Heart right ventricle (tissue), 16 donors: ENCODE measurements at regions of chr11 and their contacts with region 1.

Region 1: DNA sequence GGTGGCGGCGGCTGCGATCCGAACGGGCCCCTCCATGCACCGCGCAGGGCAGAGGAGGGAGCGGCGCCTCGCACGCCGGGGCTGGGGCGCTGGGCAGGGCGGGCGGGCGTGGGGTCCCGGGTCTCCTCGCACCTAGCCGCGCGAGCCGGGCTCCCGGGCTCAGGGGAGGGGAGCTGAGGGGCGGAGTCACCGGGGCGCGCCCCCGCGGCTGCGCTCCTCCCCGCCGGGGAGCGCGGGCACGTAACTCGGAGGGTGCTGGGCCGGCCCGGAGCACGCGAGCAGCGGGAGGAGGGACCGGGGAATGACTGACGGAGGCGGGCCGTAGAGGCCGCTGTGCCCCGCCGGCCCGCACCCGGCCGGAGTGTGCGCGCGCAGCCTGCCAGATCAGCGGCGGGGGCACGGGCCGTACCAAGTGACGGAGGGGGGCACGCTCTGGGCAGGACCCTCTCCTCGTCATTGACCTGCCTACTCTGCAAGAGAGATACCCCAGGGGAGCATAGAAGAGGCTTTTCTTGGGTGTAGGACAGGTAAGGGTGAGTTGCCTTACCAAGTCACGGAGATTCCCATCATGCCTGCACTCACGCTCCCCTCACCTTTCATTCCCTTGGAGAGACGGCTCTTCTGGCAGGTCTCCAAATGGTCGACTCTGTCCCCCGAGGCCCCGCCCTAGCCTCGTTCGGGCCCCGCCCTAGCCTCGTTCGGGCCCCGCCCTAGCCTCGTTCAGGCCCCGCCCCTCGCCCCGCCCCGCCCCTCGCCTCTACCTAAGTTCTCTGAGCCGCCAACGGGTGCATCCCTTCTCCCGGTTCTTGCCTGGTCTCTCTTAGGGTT is at the start of gene CDON:
- DNase-seq: peak; percentile 91 to 94
- ATAC-seq: peak; percentile 98 to 100 (median 99)
- H3K4me3 ChIP-seq: peak within 1 kb of the TSS; percentile 66 to 84 (median 72)
- H3K27ac ChIP-seq: peak within 1 kb of the TSS in 9 of 10 donors; percentile 63 to 90 (median 78)
- H3K4me1 ChIP-seq: peaks cover 0 to 21% (median 16%) of the 10 kb centered on the region in 9 donors
- H3K27me3 ChIP-seq: peaks cover 0 to 30% (median 0%) of the 10 kb centered on the region in 7 donors
- CTCF ChIP-seq: peak in 4 of 9 donors; percentile 25 to 53 (median 44)
- total RNA-seq, gene CDON: 5.4 to 17.1 (median 9.3) TPM

Region 2: GRCh38 chr11:125724125-125724524 is 338.8 kb before region 1 on chr11:
- intact Hi-C with region 1: no loop called
- DNase-seq: no peak
- ATAC-seq: no peak
- H3K4me3 ChIP-seq: no peak overlapping the region
- H3K27ac ChIP-seq: no peak overlapping the region
- H3K4me1 ChIP-seq: no peaks in the 10 kb centered on the region
- H3K27me3 ChIP-seq: peaks cover 0 to 9% (median 0%) of the 10 kb centered on the region in 7 donors
- CTCF ChIP-seq: peak in 1 of 9 donors; percentile 10

Region 3: GRCh38 chr11:125923012-125923579 is 139.8 kb before region 1 on chr11:
- intact Hi-C with region 1: loop called in 3 of 10 experiments (anchors 5 to 10 kb)
- DNase-seq: peak; percentile 24 to 68
- ATAC-seq: peak in 7 of 8 donors; percentile 76 to 87 (median 81)
- H3K4me3 ChIP-seq: no peak overlapping the region
- H3K27ac ChIP-seq: no peak overlapping the region
- H3K4me1 ChIP-seq: no peaks in the 10 kb centered on the region
- H3K27me3 ChIP-seq: peaks cover 0 to 17% (median 0%) of the 10 kb centered on the region in 7 donors
- CTCF ChIP-seq: peak; percentile 62 to 87 (median 79)

Region 4: GRCh38 chr11:125941619-125942611 is 121.0 kb before region 1 on chr11:
- intact Hi-C with region 1: loop called in 4 of 10 experiments (anchors 5 to 10 kb)
- DNase-seq: peak; percentile 55 to 63
- ATAC-seq: peak; percentile 68 to 89 (median 78)
- H3K4me3 ChIP-seq: no peak overlapping the region
- H3K27ac ChIP-seq: peak overlapping the region in 8 of 10 donors; percentile 5 to 72 (median 54)
- H3K4me1 ChIP-seq: peaks cover 7 to 26% (median 17%) of the 10 kb centered on the region in 9 donors
- H3K27me3 ChIP-seq: peaks cover 0 to 4% (median 0%) of the 10 kb centered on the region in 7 donors
- CTCF ChIP-seq: peak; percentile 30 to 74 (median 70)

Region 5: GRCh38 chr11:126024123-126024522 is 38.8 kb before region 1 on chr11:
- intact Hi-C with region 1: no loop called
- DNase-seq: no peak
- ATAC-seq: peak; percentile 61 to 95 (median 78)
- H3K4me3 ChIP-seq: no peak overlapping the region
- H3K27ac ChIP-seq: peak overlapping the region in 5 of 10 donors; percentile 7 to 39 (median 34)
- H3K4me1 ChIP-seq: peaks cover 0 to 20% (median 4%) of the 10 kb centered on the region in 9 donors
- H3K27me3 ChIP-seq: no peaks in the 10 kb centered on the region
- CTCF ChIP-seq: no peak

Region 6: DNA sequence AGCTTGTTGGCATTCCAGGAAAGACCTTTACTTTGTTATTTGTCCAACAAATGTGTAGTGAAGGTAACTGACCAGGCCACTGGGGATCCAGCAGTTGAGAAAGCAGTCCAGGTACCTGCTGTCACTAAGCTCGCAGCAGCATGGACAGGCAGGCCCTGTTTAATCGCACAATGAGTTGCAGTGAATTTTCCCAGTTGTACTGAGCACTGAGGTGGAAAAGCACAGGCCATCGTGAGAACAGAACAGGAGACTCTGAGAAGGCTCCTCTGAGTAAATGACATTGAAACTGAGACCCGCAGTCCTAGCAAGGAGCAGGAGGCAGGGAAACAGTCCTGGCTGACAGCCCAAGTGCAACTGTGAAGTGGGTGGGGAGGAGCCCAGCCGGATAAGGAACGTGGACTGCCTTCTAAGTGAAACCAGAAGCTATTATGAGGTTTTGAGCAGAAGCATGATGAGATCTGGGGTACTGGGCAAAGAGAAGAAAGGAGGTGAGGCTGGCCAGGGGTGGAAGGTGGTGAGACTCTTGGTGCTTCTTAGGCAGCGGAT is 39.6 kb after region 1 on chr11:
- intact Hi-C with region 1: no loop called
- DNase-seq: peak; percentile 33 to 49
- ATAC-seq: peak; percentile 19 to 73 (median 47)
- H3K4me3 ChIP-seq: no peak overlapping the region
- H3K27ac ChIP-seq: no peak overlapping the region
- H3K4me1 ChIP-seq: peaks cover 3 to 18% (median 11%) of the 10 kb centered on the region in 9 donors
- H3K27me3 ChIP-seq: no peaks in the 10 kb centered on the region
- CTCF ChIP-seq: no peak

Region 7: GRCh38 chr11:126115816-126116331 is 53.0 kb after region 1 on chr11:
- intact Hi-C with region 1: loop called in 5 of 10 experiments (anchors 5 to 10 kb)
- DNase-seq: peak; percentile 64 to 75
- ATAC-seq: peak; percentile 63 to 81 (median 73)
- H3K4me3 ChIP-seq: no peak overlapping the region
- H3K27ac ChIP-seq: peak overlapping the region; percentile 23 to 86 (median 78)
- H3K4me1 ChIP-seq: peaks cover 25 to 59% (median 49%) of the 10 kb centered on the region in 9 donors
- H3K27me3 ChIP-seq: no peaks in the 10 kb centered on the region
- CTCF ChIP-seq: peak in 5 of 9 donors; percentile 7 to 48 (median 45)

Region 8: DNA sequence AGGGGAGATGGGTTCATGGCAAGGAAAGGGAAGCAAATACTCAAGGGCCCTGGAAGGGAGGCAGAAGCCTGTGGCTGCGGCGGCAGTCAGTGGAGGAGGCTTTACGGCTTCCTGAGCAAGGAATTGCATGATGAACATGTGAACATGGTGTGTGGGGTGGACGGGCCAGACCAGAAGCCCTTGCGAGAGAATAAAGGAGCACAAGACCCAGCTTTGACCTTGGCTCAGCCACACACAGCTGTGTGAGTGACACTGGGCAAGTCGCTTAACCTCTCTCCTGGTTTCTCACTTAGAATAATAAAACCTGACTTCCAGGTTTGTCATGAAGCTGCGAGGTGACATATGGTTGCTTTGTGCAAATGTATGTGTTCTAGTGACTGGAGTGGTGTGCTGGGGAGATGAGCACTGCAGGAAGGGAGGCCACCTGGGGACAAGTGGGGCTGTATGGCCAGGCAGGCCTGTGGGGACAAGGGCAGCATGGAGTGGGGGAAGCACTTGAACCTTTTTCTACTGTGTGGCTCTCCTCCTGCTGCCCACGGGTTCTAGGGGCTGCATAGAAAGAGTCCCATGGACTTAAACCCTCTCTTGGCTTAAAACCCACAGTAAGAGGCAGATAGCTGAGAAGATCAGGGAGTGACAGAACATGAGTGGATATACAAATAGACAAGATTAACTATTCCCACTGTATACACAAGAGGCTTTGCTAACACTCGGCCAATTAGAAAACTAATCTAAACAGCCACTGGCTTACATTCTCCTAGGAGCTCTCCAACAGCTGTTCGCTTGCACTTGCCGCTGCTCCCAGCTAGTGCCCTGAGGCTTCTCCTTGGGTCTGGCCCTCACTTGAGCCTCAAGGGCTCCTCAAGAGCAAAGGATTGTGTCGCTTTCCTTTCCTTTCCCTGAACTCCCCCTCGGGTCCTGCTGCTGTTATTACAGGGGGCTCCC is 67.1 kb after region 1 on chr11:
- intact Hi-C with region 1: no loop called
- DNase-seq: no peak
- ATAC-seq: peak in 2 of 8 donors; percentile 23 to 26
- H3K4me3 ChIP-seq: no peak overlapping the region
- H3K27ac ChIP-seq: no peak overlapping the region
- H3K4me1 ChIP-seq: peaks cover 0 to 38% (median 10%) of the 10 kb centered on the region in 9 donors
- H3K27me3 ChIP-seq: no peaks in the 10 kb centered on the region
- CTCF ChIP-seq: no peak

Region 9: DNA sequence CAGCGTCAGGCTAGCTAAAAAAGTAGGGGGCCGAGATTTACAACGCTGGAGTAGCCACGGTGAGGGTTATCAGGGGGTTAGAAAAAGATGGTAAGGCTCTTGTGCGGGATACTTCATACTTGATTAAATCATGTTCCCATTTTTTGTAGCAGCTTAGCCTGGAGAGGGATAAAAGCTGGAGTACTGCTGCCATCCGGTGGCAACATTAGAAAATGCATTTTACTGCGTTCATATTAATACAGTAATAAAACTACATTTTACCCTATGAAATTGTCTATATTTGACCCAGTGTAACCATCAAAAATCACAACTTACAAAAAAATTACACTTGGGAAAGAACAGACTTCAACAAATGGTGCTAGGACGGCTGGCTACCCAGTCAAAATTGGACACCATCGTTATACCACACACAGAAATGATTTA is 131.2 kb after region 1 on chr11:
- intact Hi-C with region 1: loop called in 7 of 10 experiments (anchors 5 to 10 kb)
- DNase-seq: peak in 1 of 2 donors; percentile 36
- ATAC-seq: peak in 7 of 8 donors; percentile 38 to 83 (median 65)
- H3K4me3 ChIP-seq: no peak overlapping the region
- H3K27ac ChIP-seq: peak overlapping the region in 1 of 10 donors; percentile 19
- H3K4me1 ChIP-seq: peaks cover 0 to 19% (median 0%) of the 10 kb centered on the region in 9 donors
- H3K27me3 ChIP-seq: no peaks in the 10 kb centered on the region
- CTCF ChIP-seq: peak; percentile 42 to 78 (median 70)

Region 10: GRCh38 chr11:126211235-126212088 is 148.6 kb after region 1 on chr11 and contains the starts of genes FAM118B and RPUSD4:
- intact Hi-C with region 1: loop called in 1 of 10 experiments (anchors 5 kb)
- DNase-seq: peak; percentile 98 to 99
- ATAC-seq: peak; percentile 98 to 100 (median 100)
- H3K4me3 ChIP-seq: peak within 1 kb of the TSS; percentile 79 to 99 (median 92)
- H3K27ac ChIP-seq: peak within 1 kb of the TSS in 9 of 10 donors; percentile 9 to 90 (median 79)
- H3K4me1 ChIP-seq: peaks cover 4 to 56% (median 42%) of the 10 kb centered on the region in 9 donors
- H3K27me3 ChIP-seq: no peaks in the 10 kb centered on the region
- CTCF ChIP-seq: peak in 1 of 9 donors; percentile 5
- total RNA-seq, gene FAM118B: 18.3 to 52.8 (median 24.7) TPM
- total RNA-seq, gene RPUSD4: 34.5 to 70.0 (median 37.4) TPM